ENCODE measurements at regions of chr1 and their contacts with region 1.

Region 1: DNA sequence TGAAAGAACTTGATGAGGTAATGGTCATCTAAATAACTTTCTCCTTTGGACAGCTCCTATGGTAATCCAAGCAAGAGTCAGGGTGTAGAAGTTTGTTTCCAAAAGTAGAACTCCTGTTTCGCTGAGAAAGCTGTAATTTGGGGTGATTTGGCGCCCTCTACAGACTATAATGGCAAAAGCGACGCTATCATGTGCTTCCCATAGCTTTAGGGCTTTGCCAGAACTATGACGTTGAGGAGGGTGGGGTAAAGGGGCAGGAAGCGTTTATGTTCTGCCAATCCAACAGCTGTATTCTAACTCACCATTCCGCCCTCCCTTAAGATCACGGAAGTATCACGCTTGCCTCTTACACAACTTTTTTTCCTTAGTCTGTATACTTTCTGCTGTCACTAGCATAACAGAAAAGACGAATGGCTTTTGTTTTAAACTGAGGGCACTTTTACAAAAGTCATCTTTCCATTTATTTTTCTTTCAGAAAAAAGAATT is at the start of gene FMO4:
- DNase-seq: peak; percentile 83 to 95
- ATAC-seq: peak; percentile 100
- total RNA-seq, gene FMO4: 6.7 to 14.5 TPM

Region 2: GRCh38 chr1:170967042-170967910 is 346.6 kb before region 1 on chr1:
- intact Hi-C with region 1: loop called in 1 of 2 experiments (anchors 10 kb)
- DNase-seq: no peak
- ATAC-seq: peak; percentile 69

Region 3: DNA sequence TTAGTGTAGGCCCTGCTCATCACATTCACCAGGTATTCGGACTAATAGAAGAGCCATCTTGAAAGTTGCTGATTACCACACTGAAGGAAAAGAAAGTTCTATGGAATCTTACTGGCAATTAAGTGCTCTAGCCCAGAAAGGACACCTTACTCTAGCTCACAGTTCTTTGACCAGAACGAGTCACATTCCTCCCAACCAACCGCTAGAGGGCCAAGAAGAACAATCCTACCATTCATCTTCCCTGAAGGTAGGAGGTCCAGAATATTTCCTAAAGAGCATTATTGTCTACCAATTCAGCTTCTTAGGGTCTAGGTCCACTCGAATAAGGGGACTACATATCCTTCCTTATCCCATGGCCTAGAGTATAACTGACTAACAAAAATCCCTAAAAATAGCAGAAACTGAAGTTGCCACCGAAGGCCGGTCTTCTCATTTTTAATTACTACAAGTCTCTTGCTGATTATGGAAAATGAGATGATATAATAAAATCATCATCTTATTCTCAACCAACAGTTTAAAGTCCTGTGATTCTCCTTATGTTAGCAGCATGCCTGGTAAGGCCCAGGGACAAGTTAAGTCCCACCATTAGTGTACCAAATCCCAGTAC is 68.3 kb before region 1 on chr1:
- intact Hi-C with region 1: loop called in 1 of 2 experiments (anchors 10 kb)
- DNase-seq: peak in 1 of 2 donors; percentile 20
- ATAC-seq: peak; percentile 77